ENCODE measurements at regions of chr2 and their contacts with region 1.

Region 1: GRCh38 chr2:160442603-160443002 is 51.0 kb downstream of the RBMS1 start:
- DNase-seq: no peak
- ATAC-seq: no peak
- H3K4me3 ChIP-seq: no peak overlapping the region
- H3K4me3 Mint-ChIP-seq: no peak overlapping the region
- H3K27ac ChIP-seq: no peak overlapping the region
- H3K27ac Mint-ChIP-seq: peak overlapping the region; percentile 42
- H3K4me1 ChIP-seq: peaks cover 4% of the 10 kb centered on the region
- H3K4me1 Mint-ChIP-seq: peaks cover 55% of the 10 kb centered on the region
- H3K27me3 ChIP-seq: no peaks in the 10 kb centered on the region
- H3K27me3 Mint-ChIP-seq: no peaks in the 10 kb centered on the region
- CTCF ChIP-seq: no peak

Region 2: GRCh38 chr2:160459543-160460332 is 17.1 kb after region 1 on chr2:
- CTCF ChIA-PET with region 1: no interaction called
- POLR2A ChIA-PET with region 1: interaction called, 4 read pairs
- intact Hi-C with region 1: loop called in 1 of 2 experiments (anchors 2 kb)
- DNase-seq: peak in 1 of 14 experiments; percentile 35
- ATAC-seq: no peak
- H3K4me3 ChIP-seq: no peak overlapping the region
- H3K4me3 Mint-ChIP-seq: peak overlapping the region; percentile 25
- H3K27ac ChIP-seq: no peak overlapping the region
- H3K27ac Mint-ChIP-seq: peak overlapping the region; percentile 38
- H3K4me1 ChIP-seq: peaks cover 30% of the 10 kb centered on the region
- H3K4me1 Mint-ChIP-seq: peaks cover 77% of the 10 kb centered on the region
- H3K27me3 ChIP-seq: no peaks in the 10 kb centered on the region
- H3K27me3 Mint-ChIP-seq: no peaks in the 10 kb centered on the region
- CTCF ChIP-seq: no peak

Region 3: DNA sequence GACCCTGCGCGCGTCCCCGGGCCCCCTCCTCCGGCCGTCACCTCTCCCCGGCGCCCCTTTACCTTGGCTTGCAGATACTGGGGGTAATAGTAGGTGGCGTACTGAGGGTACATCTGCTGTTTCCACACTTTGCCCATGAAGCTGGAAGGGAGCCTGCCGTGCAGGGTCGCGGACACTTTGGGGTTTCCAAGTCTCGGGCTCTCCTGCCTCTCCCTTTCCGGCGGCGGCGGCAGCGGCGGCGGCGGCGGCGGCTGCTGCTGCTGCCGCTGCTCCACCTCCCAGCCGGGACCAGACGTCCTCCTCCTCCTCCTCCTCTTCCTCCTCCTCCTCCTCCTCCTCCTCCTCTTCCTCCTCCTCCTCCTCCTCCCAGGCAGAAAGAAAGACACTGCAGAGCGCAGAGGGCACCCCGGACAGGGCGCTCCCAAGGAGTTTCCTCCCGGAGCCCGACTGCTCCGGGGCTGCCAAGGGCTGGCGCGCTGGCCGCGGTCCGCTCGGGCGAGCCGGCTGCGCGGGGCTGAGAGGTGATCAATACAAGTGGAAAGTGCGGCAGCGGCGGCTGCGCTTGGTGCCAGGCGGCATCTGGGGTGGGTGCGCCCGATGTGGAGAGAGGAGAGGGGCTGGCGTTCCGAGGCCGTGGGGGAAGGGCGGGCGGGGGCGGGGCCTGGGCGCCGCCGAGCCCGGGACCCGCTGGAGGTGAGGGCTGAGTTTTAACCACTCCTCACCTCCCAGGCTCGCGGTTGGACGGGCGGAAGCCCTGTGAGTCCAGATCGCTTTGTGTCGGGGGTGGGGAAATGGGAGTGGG is 50.8 kb after region 1 on chr2 and contains the start of gene RBMS1:
- CTCF ChIA-PET with region 1: no interaction called
- POLR2A ChIA-PET with region 1: no interaction called
- intact Hi-C with region 1: no loop called
- DNase-seq: peak; percentile 25 to 79 (median 47)
- ATAC-seq: peak; percentile 51
- H3K4me3 ChIP-seq: peak within 1 kb of the TSS; percentile 66
- H3K4me3 Mint-ChIP-seq: peak within 1 kb of the TSS; percentile 98
- H3K27ac ChIP-seq: peak within 1 kb of the TSS; percentile 65 to 90
- H3K27ac Mint-ChIP-seq: peak within 1 kb of the TSS; percentile 88
- H3K4me1 ChIP-seq: peaks cover 12% of the 10 kb centered on the region
- H3K4me1 Mint-ChIP-seq: peaks cover 58% of the 10 kb centered on the region
- H3K27me3 ChIP-seq: no peaks in the 10 kb centered on the region
- H3K27me3 Mint-ChIP-seq: no peaks in the 10 kb centered on the region
- CTCF ChIP-seq: no peak
- total RNA-seq, gene RBMS1: 88.6 to 90.3 TPM

Measured in CD4-positive, alpha-beta T cell (primary cell).